ENCODE measurements at regions of chr1 and their contacts with region 1.

Region 1: DNA sequence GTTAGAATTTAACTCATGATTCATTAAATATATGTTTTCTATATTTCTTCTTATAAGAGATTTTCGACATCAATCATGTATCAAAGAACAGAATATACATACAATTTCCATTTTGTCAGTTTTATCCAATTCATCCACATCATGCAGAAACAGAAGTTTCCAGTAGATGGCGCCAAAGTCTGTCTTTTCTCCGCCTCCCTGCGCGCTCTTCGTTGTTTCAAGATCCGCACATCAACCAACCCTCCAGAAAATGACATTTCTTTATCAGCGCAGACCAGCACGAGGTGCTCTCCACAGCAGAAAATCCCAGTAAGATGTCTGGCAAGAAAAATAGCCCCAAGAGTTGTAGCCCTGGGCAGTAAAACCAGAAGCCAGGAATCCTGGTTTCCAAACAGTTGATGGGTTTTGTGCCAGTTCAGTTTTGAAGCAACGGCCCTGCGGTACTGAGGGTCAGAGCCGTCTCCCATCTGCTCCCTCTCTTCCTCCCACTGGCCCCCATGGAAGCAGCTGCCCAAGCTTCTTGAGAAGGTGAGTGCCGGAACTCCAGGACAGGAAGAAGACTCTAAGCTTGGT is 38.6 kb upstream of the GPR137B start:
- DNase-seq: peak in 1 of 2 experiments; percentile 65
- H3K4me3 ChIP-seq: no peak overlapping the region
- H3K4me3 Mint-ChIP-seq: no peak overlapping the region
- H3K27ac Mint-ChIP-seq: no peak overlapping the region
- H3K4me1 ChIP-seq: no peaks in the 10 kb centered on the region
- H3K4me1 Mint-ChIP-seq: no peaks in the 10 kb centered on the region
- H3K27me3 ChIP-seq: no peaks in the 10 kb centered on the region
- H3K27me3 Mint-ChIP-seq: no peaks in the 10 kb centered on the region
- CTCF ChIP-seq: peak; percentile 70 to 79

Region 2: DNA sequence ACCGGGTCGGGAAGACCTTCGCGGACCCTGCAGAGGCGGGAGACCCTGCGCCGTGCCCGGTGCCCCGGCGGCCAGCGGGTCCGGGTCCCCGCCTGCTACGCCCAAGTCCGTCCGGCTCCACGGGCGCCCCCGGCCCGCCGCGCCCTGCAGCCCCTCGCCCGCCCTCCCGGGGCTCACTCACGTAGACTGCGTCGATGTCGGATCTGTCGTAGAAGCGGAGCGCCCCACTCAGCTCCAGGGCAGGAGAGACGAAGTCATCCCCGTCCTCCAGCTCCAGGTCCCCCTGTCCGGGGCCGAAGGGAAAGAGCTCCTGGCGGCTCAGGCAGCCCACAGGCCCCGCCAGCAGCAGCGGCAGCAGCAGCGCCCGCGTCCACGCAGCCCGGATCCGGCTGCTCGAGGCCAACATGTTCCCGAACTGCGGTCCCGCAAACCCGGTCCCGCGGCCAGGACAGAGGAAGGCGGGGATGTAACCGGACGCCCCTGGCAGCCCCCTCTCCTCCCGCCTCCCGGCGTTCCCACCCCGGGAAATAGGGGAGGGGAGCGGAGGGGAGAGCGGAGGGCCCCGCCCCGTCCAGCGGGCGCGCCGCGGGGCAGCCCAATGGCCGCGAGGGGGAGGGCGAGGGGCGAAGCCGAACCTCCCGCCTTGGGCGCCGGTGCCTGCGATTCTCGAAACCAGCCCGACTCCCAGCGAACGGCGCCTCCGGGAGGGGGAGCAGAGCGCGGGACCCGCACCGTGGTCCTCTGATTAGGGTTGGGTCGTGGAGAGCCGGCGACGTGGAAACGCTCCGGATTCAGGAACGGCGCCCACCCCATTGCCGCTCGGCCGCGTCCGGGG is 38.8 kb before region 1 on chr1 and contains the start of gene NID1:
- CTCF ChIA-PET with region 1: no interaction called
- POLR2A ChIA-PET with region 1: no interaction called
- intact Hi-C with region 1: no loop called
- DNase-seq: peak; percentile 61 to 80
- H3K4me3 ChIP-seq: peak within 1 kb of the TSS; percentile 37
- H3K4me3 Mint-ChIP-seq: peak within 1 kb of the TSS; percentile 69
- H3K27ac Mint-ChIP-seq: no peak within 1 kb of the TSS
- H3K4me1 ChIP-seq: no peaks in the 10 kb centered on the region
- H3K4me1 Mint-ChIP-seq: no peaks in the 10 kb centered on the region
- H3K27me3 ChIP-seq: no peaks in the 10 kb centered on the region
- H3K27me3 Mint-ChIP-seq: no peaks in the 10 kb centered on the region
- CTCF ChIP-seq: no peak
- total RNA-seq, gene NID1: 43.7 and 48.5 TPM in 2 replicates

Region 3: DNA sequence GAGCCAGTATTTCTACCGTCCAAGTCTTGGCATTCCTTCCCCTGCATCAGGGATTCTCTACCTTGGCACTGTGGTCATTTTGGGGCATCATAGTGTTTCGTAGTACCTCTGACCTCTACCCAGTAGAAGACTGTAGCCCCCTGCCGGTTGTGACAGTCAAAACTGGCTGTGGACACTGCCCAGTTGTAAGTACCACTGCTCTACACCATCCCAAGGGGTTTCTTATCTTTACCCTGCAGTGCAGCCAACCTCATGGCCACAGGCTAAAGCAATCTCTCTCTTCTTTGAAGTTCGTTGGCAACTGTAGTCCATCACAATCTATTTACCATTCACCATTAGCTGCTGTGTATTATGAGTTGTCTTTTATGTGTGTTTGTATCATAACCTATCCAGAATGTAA is 207.3 kb after region 1 on chr1:
- CTCF ChIA-PET with region 1: no interaction called
- POLR2A ChIA-PET with region 1: no interaction called
- intact Hi-C with region 1: loop called (anchors 10 kb)
- DNase-seq: peak in 1 of 2 experiments; percentile 27
- H3K4me3 ChIP-seq: no peak overlapping the region
- H3K4me3 Mint-ChIP-seq: no peak overlapping the region
- H3K27ac Mint-ChIP-seq: no peak overlapping the region
- H3K4me1 ChIP-seq: no peaks in the 10 kb centered on the region
- H3K4me1 Mint-ChIP-seq: no peaks in the 10 kb centered on the region
- H3K27me3 ChIP-seq: no peaks in the 10 kb centered on the region
- H3K27me3 Mint-ChIP-seq: peaks cover 2% of the 10 kb centered on the region
- CTCF ChIP-seq: peak; percentile 16 to 31

Region 4: DNA sequence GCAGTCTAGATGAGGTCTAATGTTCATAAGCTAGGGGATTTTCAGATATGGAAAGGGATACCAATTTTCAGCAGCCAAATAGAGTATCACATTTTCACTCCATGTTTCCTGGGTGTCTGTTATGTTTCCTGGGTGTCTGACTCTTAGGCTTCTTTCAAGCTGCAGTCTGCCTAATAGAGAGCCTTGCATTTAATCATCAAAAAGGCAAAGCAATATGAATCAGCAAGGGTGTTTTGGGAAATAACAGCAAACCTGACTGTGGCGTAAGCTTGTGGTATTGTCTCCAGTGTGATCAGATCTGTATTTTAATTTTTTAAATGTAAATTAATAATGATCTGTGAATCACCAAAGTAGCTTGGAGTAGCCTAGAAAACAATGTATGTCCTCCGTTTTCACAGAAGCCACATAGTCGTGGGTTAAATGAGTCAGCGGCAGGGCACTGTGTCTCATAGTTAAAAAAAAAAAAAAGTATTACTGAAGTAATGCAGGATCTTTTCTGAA is 430.5 kb after region 1 on chr1:
- CTCF ChIA-PET with region 1: interaction called, 3 read pairs
- POLR2A ChIA-PET with region 1: no interaction called
- intact Hi-C with region 1: loop called (anchors 1 kb)
- DNase-seq: no peak
- H3K4me3 ChIP-seq: no peak overlapping the region
- H3K4me3 Mint-ChIP-seq: no peak overlapping the region
- H3K27ac Mint-ChIP-seq: no peak overlapping the region
- H3K4me1 ChIP-seq: peaks cover 14% of the 10 kb centered on the region; the same call in 1 of the 2 replicates
- H3K4me1 Mint-ChIP-seq: peaks cover 13% of the 10 kb centered on the region
- H3K27me3 ChIP-seq: no peaks in the 10 kb centered on the region
- H3K27me3 Mint-ChIP-seq: no peaks in the 10 kb centered on the region
- CTCF ChIP-seq: no peak

Region 5: GRCh38 chr1:236774926-236775325 is 671.2 kb after region 1 on chr1:
- CTCF ChIA-PET with region 1: no interaction called
- POLR2A ChIA-PET with region 1: no interaction called
- intact Hi-C with region 1: loop called (anchors 5 kb)
- DNase-seq: peak in 1 of 2 experiments; percentile 23
- H3K4me3 ChIP-seq: no peak overlapping the region
- H3K4me3 Mint-ChIP-seq: no peak overlapping the region
- H3K27ac Mint-ChIP-seq: no peak overlapping the region
- H3K4me1 ChIP-seq: no peaks in the 10 kb centered on the region
- H3K4me1 Mint-ChIP-seq: no peaks in the 10 kb centered on the region
- H3K27me3 ChIP-seq: no peaks in the 10 kb centered on the region
- H3K27me3 Mint-ChIP-seq: peaks cover 17% of the 10 kb centered on the region
- CTCF ChIP-seq: peak; percentile 44 to 53

Region 6: DNA sequence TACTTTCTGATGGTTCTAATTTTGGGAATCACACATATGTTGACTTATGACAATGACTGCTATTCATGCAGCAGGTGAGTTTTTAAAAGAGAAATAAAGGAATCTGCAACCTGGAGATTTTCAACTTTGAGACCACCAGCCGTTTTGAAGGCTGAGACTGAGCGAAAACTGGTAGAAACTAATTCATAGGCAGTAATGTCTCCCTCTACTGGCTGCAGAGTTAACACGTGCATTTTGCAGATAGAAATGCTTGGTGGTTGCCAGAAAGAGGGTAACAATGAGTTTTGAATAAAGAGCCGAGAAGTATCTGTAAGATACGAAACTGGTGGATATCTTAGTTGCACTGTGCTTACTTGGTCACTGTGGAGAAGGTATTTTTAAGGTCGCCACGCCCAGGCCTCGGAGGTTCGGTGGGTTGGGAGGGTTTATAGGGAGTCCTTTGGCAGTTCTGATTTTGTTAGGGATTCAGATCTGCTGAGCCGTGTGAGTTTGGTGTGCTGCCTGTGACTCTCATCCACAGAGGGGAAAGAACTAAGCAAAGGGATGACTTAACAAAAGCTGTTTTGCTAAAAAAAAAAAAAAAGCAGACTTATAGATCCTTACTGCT is 1021.2 kb after region 1 on chr1:
- CTCF ChIA-PET with region 1: no interaction called
- POLR2A ChIA-PET with region 1: no interaction called
- intact Hi-C with region 1: loop called (anchors 10 kb)
- DNase-seq: peak in 1 of 2 experiments; percentile 13
- H3K4me3 ChIP-seq: no peak overlapping the region
- H3K4me3 Mint-ChIP-seq: no peak overlapping the region
- H3K27ac Mint-ChIP-seq: no peak overlapping the region
- H3K4me1 ChIP-seq: no peaks in the 10 kb centered on the region
- H3K4me1 Mint-ChIP-seq: no peaks in the 10 kb centered on the region
- H3K27me3 ChIP-seq: no peaks in the 10 kb centered on the region
- H3K27me3 Mint-ChIP-seq: peaks cover 3% of the 10 kb centered on the region
- CTCF ChIP-seq: peak in 1 of 2 experiments; percentile 41